Endothelial cell of umbilical vein (primary cell): ENCODE measurements at regions of chr3 and their contacts with region 1.

Region 1: DNA sequence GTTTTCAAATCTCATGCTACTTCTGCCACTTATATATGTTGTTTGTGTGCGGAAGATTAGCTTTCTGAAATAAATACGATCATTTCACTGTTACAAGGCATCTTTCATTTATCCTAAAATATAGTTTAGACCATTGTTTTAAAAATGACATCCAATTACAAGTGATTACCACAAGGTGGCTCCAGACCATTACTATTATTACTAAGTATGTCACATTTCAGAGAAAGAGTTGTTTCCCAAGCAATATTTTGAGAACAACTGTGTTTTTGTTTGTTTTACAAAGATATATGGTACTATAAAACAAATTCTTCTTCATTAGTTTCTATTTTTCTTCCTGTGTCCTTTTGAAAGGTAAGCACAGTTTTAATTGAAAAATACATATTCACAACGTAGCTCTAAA is 136.0 kb upstream of the RAP2B start:
- DNase-seq: peak; percentile 53
- H3K4me3 ChIP-seq: no peak overlapping the region
- H3K27ac ChIP-seq: no peak overlapping the region
- H3K4me1 ChIP-seq: peaks cover 8% of the 10 kb centered on the region
- H3K27me3 ChIP-seq: peaks cover 0 to 6% of the 10 kb centered on the region in 2 experiments
- CTCF ChIP-seq: peak; percentile 28 to 35
- POLR2A ChIP-seq: no peak

Region 2: GRCh38 chr3:153291056-153291685 is 265.1 kb after region 1 on chr3:
- CTCF ChIA-PET with region 1: interaction called, 6 read pairs
- POLR2A ChIA-PET with region 1: no interaction called
- dilution Hi-C with region 1: no loop called
- intact Hi-C with region 1: loop called (anchors 5 kb)
- DNase-seq: peak; percentile 27
- H3K4me3 ChIP-seq: no peak overlapping the region
- H3K27ac ChIP-seq: no peak overlapping the region
- H3K4me1 ChIP-seq: no peaks in the 10 kb centered on the region
- H3K27me3 ChIP-seq: no peaks in the 10 kb centered on the region
- CTCF ChIP-seq: peak; percentile 17 to 25
- POLR2A ChIP-seq: no peak

Region 3: DNA sequence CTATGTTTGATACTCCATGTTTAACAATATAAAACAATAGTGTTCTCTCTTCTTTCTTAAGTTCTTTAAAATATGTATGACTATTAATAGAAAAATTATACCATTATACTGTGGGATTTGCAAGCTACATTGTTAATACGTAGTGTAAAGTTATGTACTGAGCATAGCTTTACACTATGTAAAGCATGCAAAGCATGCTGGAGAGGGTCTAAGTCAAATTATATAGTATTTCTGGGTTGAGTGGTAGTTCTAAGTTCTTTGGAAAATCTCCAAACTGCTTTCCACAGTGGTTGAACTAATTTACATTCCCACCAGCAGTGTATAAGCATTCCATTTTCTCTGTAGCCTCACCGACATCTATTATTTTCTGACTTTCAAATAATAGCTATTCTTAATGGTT is 389.0 kb after region 1 on chr3:
- CTCF ChIA-PET with region 1: no interaction called
- POLR2A ChIA-PET with region 1: no interaction called
- dilution Hi-C with region 1: no loop called
- intact Hi-C with region 1: no loop called
- DNase-seq: no peak
- H3K4me3 ChIP-seq: no peak overlapping the region
- H3K27ac ChIP-seq: no peak overlapping the region
- H3K4me1 ChIP-seq: no peaks in the 10 kb centered on the region
- H3K27me3 ChIP-seq: no peaks in the 10 kb centered on the region
- CTCF ChIP-seq: no peak
- POLR2A ChIP-seq: no peak

Region 4: DNA sequence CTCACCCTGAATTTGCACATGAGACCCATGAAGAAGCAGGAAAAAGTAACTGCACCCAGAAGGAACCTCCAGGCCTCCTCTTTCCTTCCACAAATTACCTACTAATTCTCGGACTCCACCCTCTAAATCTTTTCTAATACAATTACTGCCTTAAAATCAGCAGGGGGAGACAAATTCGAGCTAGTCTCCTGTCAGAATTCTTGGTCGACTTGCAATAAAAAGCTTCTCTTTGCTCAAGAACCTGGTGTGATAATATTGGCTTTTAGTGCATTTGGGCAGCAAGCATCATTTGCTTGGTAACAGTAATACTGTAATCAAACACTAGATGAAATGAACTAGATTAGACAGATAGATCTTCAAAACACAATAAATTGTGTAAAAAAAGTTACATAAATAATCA is 417.9 kb after region 1 on chr3:
- CTCF ChIA-PET with region 1: interaction called, 4 read pairs
- POLR2A ChIA-PET with region 1: no interaction called
- dilution Hi-C with region 1: no loop called
- intact Hi-C with region 1: loop called (anchors 5 kb)
- DNase-seq: peak; percentile 18
- H3K4me3 ChIP-seq: no peak overlapping the region
- H3K27ac ChIP-seq: no peak overlapping the region
- H3K4me1 ChIP-seq: no peaks in the 10 kb centered on the region
- H3K27me3 ChIP-seq: no peaks in the 10 kb centered on the region
- CTCF ChIP-seq: peak; percentile 1 to 6
- POLR2A ChIP-seq: no peak

Region 5: GRCh38 chr3:153595186-153595815 is 569.3 kb after region 1 on chr3:
- CTCF ChIA-PET with region 1: interaction called, 22 read pairs
- POLR2A ChIA-PET with region 1: no interaction called
- dilution Hi-C with region 1: no loop called
- intact Hi-C with region 1: loop called (anchors 1 kb)
- DNase-seq: peak; percentile 66
- H3K4me3 ChIP-seq: no peak overlapping the region
- H3K27ac ChIP-seq: no peak overlapping the region
- H3K4me1 ChIP-seq: peaks cover 15% of the 10 kb centered on the region
- H3K27me3 ChIP-seq: no peaks in the 10 kb centered on the region
- CTCF ChIP-seq: peak; percentile 35 to 62
- POLR2A ChIP-seq: no peak

Region 6: GRCh38 chr3:153927107-153927506 is 901.1 kb after region 1 on chr3:
- CTCF ChIA-PET with region 1: interaction called, 3 read pairs
- POLR2A ChIA-PET with region 1: no interaction called
- dilution Hi-C with region 1: no loop called
- intact Hi-C with region 1: loop called (anchors 1 kb)
- DNase-seq: peak; percentile 50
- H3K4me3 ChIP-seq: no peak overlapping the region
- H3K27ac ChIP-seq: no peak overlapping the region
- H3K4me1 ChIP-seq: no peaks in the 10 kb centered on the region
- H3K27me3 ChIP-seq: no peaks in the 10 kb centered on the region
- CTCF ChIP-seq: no peak
- POLR2A ChIP-seq: no peak

Region 7: GRCh38 chr3:153970741-153971347 is 944.8 kb after region 1 on chr3:
- CTCF ChIA-PET with region 1: interaction called, 22 read pairs
- POLR2A ChIA-PET with region 1: no interaction called
- dilution Hi-C with region 1: no loop called
- intact Hi-C with region 1: loop called (anchors 2 kb)
- DNase-seq: peak; percentile 64
- H3K4me3 ChIP-seq: no peak overlapping the region
- H3K27ac ChIP-seq: no peak overlapping the region
- H3K4me1 ChIP-seq: no peaks in the 10 kb centered on the region
- H3K27me3 ChIP-seq: no peaks in the 10 kb centered on the region
- CTCF ChIP-seq: peak; percentile 23 to 33
- POLR2A ChIP-seq: no peak

Region 8: DNA sequence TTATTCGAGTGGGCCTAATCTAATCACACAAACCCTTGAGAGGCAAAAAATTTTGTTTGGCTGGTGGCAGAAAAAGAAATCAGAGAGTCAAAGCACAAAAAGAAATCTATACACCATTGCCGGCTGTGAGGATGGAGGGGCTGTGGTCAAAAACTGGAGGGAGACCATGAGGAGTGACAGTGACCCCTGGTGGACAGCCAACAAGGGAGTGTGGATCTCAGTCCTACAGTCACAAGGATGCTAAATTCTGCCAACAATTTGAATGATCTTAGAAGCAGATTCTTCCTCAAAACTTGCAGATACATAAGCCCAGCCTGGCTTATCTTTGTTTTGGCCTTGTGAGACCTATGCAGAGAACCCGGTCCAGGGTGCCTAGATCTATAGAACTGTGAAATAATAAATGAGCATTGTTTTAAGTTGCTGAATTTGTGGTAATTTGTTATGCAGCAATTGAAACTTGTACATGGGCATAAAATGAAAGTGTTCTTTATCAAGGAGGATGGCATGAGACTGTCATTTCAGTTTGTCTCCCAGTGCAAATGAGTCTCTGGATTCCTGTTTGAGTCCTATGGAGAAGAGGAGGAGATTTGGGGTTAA is 992.2 kb after region 1 on chr3:
- CTCF ChIA-PET with region 1: interaction called, 13 read pairs
- POLR2A ChIA-PET with region 1: no interaction called
- dilution Hi-C with region 1: no loop called
- intact Hi-C with region 1: loop called (anchors 1 kb)
- DNase-seq: peak; percentile 23
- H3K4me3 ChIP-seq: no peak overlapping the region
- H3K27ac ChIP-seq: no peak overlapping the region
- H3K4me1 ChIP-seq: no peaks in the 10 kb centered on the region
- H3K27me3 ChIP-seq: peaks cover 1 to 2% of the 10 kb centered on the region in 2 experiments
- CTCF ChIP-seq: peak; percentile 67
- POLR2A ChIP-seq: no peak